GM10248 (cell line): ENCODE measurements at regions of chr3 and their contacts with region 1.

Region 1: DNA sequence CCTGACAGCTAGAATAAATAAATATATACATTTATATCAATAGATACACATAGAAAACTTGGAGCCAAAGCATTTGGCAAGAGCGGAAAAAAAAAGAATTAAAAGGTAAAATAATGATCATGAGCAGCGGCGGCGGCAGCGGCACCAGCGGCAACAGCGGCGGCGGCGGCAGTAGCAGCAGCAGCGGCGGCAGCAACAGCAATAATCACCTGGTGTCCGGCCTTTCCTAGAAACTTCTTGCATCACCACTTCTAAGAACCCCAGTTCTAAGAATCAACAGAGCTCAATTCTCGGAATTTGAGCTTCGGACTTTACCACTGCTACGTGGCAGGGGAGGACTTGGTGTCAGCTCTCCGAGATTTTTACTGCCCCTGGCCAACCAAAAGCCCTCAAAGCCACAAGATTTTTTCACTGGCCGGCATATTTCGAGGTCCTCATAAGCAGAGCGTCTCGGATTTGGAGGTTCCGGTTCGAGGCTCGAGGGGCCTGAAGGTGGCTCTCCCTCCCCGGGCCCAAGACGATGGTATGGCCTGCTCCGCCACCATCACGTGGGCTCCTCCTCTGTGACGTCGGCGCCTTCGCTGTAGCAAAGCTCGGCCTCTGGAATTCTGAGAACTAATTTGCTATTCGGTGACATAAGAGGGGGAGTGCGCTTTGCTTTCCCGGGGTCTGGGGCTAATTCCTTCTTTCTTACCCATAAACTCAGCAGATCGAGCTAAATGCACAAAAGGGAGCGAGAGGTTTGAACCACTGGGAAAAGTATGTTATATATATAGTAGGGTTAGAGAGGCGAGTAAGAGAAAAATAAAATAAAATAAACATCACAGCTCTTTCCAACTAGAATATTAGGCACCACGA is at the start of gene BCL6:
- DNase-seq: peak; percentile 64
- CTCF ChIP-seq: no peak

Region 2: GRCh38 chr3:187082758-187083375 is 662.6 kb before region 1 on chr3:
- CTCF ChIA-PET with region 1: no interaction called
- POLR2A ChIA-PET with region 1: no interaction called
- DNase-seq: no peak
- CTCF ChIP-seq: no peak

Region 3: GRCh38 chr3:187648177-187648576 is 97.3 kb before region 1 on chr3:
- CTCF ChIA-PET with region 1: no interaction called
- POLR2A ChIA-PET with region 1: interaction called, 11 read pairs
- DNase-seq: peak; percentile 8
- CTCF ChIP-seq: no peak

Region 4: GRCh38 chr3:187763850-187764648 is 18.6 kb after region 1 on chr3:
- CTCF ChIA-PET with region 1: interaction called, 11 read pairs
- POLR2A ChIA-PET with region 1: no interaction called
- DNase-seq: no peak
- CTCF ChIP-seq: no peak

Region 5: DNA sequence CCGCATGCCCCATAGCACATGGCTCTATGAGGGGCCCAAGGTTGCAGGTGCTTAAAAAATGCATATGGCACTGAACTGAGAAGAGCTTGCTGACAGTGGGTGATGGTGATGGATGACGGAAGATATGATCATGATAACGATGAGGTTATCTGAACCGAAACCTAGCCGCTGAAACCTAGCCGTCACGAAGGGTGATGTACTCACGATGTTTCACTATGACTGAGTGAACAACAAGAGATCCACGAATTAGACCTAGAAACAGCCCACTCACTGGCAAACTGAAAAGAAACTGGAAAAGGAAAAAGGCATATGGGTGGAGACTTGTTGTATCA is 57.5 kb after region 1 on chr3:
- CTCF ChIA-PET with region 1: interaction called, 12 read pairs
- POLR2A ChIA-PET with region 1: no interaction called
- DNase-seq: peak; percentile 46
- CTCF ChIP-seq: no peak

Region 6: DNA sequence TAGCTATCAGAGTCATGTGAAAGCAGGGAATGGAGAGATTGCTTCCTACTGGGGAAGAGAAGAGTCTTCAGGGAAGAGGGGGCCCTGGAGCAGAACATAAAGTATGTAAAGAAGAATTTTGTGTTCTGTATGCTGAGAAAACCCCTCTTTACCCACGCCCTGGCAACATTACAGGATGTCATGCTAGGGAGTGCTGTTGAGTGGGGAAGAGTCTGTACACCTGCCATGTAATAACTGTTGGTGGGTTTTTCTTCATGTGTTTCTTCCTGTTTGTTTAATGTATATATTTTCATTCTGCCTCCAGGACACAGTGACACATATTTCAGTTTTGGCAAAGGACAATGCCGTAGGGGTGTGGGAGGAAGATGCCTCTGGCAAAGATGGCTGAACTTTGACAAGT is 285.7 kb after region 1 on chr3:
- CTCF ChIA-PET with region 1: no interaction called
- POLR2A ChIA-PET with region 1: no interaction called
- DNase-seq: no peak
- CTCF ChIP-seq: no peak

Region 7: GRCh38 chr3:188954590-188955208 is 1209.3 kb after region 1 on chr3:
- CTCF ChIA-PET with region 1: interaction called, 530 read pairs
- POLR2A ChIA-PET with region 1: interaction called, 3 read pairs
- DNase-seq: peak; percentile 60
- CTCF ChIP-seq: peak; percentile 86